PC-9 (cell line): ENCODE measurements at regions of chr1 and their contacts with region 1.

Region 1: GRCh38 chr1:7752512-7753417 is 18.3 kb upstream of the VAMP3 start:
- DNase-seq: peak in 1 of 2 experiments; percentile 37
- H3K4me3 ChIP-seq: peak overlapping the region; percentile 44; the same call in 1 of the 2 replicates
- H3K27ac ChIP-seq: no peak overlapping the region
- H3K4me1 ChIP-seq: no peaks in the 10 kb centered on the region
- H3K27me3 ChIP-seq: peaks cover 25% of the 10 kb centered on the region; the same call in 1 of the 2 replicates
- CTCF ChIP-seq: peak; percentile 78

Region 2: DNA sequence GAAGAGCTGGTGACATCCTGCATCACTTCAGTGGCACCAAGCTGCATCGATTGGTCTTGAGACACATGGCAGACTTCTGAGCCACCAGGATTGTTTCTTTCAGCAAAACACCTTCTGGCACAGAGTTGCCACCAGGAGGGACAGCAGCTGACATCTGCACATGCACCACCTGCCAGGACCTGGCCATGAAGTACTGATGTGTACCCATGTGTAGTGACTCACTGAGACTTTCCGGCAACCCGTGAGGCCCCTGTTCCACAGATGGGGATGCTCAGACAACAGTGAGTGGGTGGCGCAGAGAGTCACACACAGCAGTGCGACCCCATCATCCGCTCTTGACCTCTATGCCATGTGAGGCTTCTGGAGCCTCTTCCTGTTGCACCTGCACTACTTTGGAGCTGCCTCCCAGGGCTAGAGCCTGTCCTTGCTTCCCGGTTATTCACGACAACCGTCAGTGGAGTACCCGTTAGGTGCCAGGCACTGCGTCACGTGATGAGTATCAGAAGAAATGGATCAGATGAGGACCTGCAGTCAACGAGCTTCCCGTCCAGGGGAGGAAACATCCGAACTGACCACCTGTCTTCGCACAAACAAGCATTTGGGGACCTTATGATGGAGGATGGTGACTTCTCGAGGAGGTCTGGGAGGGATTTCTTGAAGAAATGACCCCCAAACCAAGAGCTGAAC is 62.1 kb before region 1 on chr1:
- CTCF ChIA-PET with region 1: no interaction called
- POLR2A ChIA-PET with region 1: no interaction called
- intact Hi-C with region 1: no loop called
- DNase-seq: no peak
- H3K4me3 ChIP-seq: no peak overlapping the region
- H3K27ac ChIP-seq: no peak overlapping the region
- H3K4me1 ChIP-seq: no peaks in the 10 kb centered on the region
- H3K27me3 ChIP-seq: peaks cover 34% of the 10 kb centered on the region
- CTCF ChIP-seq: no peak

Region 3: DNA sequence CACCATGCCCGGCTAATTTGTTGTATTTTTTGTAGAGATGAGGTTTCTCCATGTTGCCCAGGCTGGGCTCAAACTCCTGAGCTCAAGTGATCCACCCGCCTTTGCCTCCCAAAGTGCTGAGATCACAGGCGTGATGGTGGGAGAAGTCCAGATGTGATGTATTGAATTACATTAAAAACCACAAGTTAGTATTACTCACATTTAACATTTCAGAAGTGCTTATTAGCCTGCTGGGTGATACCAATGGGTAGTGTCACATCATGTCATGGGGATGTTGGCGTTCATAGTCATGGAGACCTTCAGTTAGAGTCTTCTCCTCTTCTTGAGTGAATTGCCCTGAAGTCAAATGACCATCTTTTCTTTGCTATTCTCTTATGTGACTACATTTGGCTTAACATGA is 45.2 kb before region 1 on chr1:
- CTCF ChIA-PET with region 1: no interaction called
- POLR2A ChIA-PET with region 1: interaction called, 24 read pairs
- intact Hi-C with region 1: no loop called
- DNase-seq: no peak
- H3K4me3 ChIP-seq: no peak overlapping the region
- H3K27ac ChIP-seq: no peak overlapping the region
- H3K4me1 ChIP-seq: no peaks in the 10 kb centered on the region
- H3K27me3 ChIP-seq: no peaks in the 10 kb centered on the region
- CTCF ChIP-seq: no peak

Region 4: DNA sequence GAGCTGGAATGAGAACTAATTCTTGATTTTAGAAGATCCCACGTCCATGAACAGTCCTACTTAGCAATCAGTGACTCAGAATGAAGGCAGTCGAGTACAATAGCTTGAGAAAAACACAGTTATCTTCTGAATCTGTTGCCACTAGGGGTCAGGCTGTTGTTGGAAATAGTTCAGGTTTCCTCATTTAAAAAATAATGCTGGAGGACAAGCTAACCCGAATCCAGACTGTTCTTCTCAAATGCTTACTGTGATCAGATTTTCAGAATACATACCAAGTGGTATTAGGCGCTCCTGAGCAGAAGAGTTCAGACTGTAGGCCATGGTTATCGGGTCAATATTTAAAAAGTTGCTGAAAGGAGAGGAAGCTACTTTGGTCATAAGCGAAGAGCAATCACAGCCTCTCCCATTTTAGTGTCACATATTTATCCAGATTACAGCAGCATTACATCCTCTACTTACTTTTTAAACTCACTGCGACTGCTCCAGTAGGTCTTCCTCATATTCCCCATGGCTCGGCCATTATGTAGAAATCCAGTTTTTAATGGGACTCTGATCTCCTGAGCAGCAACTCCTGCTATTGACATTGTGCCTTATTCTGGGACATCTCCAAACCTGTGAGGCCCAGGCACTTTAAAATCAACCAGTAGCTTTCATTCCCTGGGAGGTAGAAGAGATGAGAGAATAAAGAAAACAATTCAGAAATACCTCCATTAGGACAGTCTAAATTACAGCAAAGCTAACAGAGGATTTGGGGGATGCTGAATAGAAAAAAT is 262.5 kb after region 1 on chr1:
- CTCF ChIA-PET with region 1: no interaction called
- POLR2A ChIA-PET with region 1: no interaction called
- intact Hi-C with region 1: no loop called
- DNase-seq: peak; percentile 58 to 72
- H3K4me3 ChIP-seq: peak overlapping the region; percentile 91; the same call in 1 of the 2 replicates
- H3K27ac ChIP-seq: peak overlapping the region; percentile 90
- H3K4me1 ChIP-seq: peaks cover 75% of the 10 kb centered on the region
- H3K27me3 ChIP-seq: no peaks in the 10 kb centered on the region
- CTCF ChIP-seq: peak; percentile 70